ENCODE measurements at regions of chr5 and their contacts with region 1.

Region 1: GRCh38 chr5:118987988-118988865 is at the start of gene DTWD2:
- DNase-seq: peak; percentile 96
- total RNA-seq, gene DTWD2: 4.3 and 11.0 TPM in 2 replicates

Region 2: GRCh38 chr5:118919016-118919415 is 69.2 kb before region 1 on chr5:
- in situ Hi-C with region 1: no loop called
- DNase-seq: no peak

Region 3: DNA sequence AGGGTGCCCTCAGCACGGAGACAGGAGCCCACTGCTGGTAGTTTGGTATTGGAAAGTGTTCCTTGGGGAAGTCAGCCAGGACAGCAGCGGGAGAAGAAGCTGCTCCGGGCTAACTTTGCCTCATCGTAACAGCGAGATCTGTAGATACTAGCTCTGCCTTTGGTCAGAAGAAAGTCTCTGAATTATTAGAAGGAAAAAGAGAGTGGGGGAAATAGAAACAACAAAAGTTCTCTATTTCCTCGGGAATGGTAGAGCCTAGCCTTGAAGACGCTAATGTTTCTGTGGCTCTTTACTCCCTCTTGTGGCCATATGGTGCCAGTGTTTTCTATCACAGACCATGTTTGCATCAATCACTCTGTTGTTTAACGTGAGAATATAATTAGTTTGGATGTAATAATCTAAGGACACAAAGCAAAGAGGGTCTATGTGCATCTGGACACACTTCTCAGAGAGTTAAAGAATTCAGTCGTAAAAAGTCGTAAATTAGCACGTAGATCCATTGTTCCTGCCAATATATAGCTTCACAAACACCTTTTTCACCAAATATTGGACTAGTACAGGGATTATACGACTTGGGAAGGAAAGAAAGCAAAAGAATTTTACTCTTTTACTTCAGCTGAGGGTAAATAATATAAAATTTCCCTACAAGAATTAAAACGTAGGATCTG is 423.8 kb after region 1 on chr5:
- in situ Hi-C with region 1: loop called (anchors 25 kb)
- DNase-seq: peak; percentile 83

Measured in G401 (cell line).